ENCODE measurements at regions of chr16 and their contacts with region 1.

Region 1: GRCh38 chr16:27235055-27235937 is 32.0 kb downstream of the KDM8 start:
- DNase-seq: peak; percentile 81 to 98 (median 94)
- ATAC-seq: peak; percentile 68
- H3K4me3 ChIP-seq: peak overlapping the region; percentile 1
- H3K4me3 Mint-ChIP-seq: peak overlapping the region; percentile 83
- H3K27ac ChIP-seq: peak overlapping the region; percentile 94 to 95
- H3K27ac Mint-ChIP-seq: peak overlapping the region; percentile 95
- H3K4me1 ChIP-seq: peaks cover 94% of the 10 kb centered on the region
- H3K4me1 Mint-ChIP-seq: peaks cover 91% of the 10 kb centered on the region
- H3K27me3 ChIP-seq: no peaks in the 10 kb centered on the region
- H3K27me3 Mint-ChIP-seq: no peaks in the 10 kb centered on the region
- CTCF ChIP-seq: peak; percentile 83

Region 2: GRCh38 chr16:27123795-27124409 is 111.4 kb before region 1 on chr16:
- CTCF ChIA-PET with region 1: no interaction called
- POLR2A ChIA-PET with region 1: no interaction called
- intact Hi-C with region 1: no loop called
- DNase-seq: no peak
- ATAC-seq: no peak
- H3K4me3 ChIP-seq: no peak overlapping the region
- H3K4me3 Mint-ChIP-seq: no peak overlapping the region
- H3K27ac ChIP-seq: no peak overlapping the region
- H3K27ac Mint-ChIP-seq: no peak overlapping the region
- H3K4me1 ChIP-seq: no peaks in the 10 kb centered on the region
- H3K4me1 Mint-ChIP-seq: no peaks in the 10 kb centered on the region
- H3K27me3 ChIP-seq: no peaks in the 10 kb centered on the region
- H3K27me3 Mint-ChIP-seq: peaks cover 3% of the 10 kb centered on the region
- CTCF ChIP-seq: no peak

Region 3: DNA sequence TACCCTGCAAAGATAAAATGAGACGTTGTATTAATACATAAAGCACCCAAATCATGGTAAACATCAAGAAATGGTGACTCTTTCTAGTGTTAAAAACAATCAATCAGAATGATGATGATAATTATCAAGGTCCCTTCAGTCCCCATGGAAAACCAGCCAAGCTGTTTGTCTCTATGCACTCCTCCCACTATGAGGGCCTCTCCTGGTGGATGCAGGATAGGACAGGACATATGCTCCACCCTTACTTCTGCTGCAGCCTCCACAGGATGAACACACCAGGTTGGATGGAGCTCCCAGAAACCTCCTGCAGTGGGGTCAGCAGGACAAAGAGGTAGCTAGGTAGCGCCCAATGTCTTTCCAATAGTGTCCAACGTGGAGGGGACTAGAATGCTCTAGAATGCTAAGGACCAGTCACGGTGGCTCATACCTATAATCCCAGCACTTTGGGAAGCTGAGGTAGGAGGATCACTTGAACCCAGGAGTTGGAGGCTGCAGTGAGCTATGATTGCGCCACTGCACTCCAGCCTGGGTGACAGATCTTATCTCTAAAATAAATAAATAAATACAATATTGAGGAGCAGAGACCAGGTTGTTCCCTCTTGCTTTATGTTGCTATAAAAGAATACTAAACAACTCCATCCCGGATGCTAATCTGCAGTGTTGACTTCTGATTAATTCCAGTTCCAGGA is 41.9 kb before region 1 on chr16:
- CTCF ChIA-PET with region 1: interaction called, 14 read pairs
- POLR2A ChIA-PET with region 1: interaction called, 30 read pairs
- intact Hi-C with region 1: loop called in 1 of 2 experiments (anchors 5 kb)
- DNase-seq: no peak
- ATAC-seq: no peak
- H3K4me3 ChIP-seq: no peak overlapping the region
- H3K4me3 Mint-ChIP-seq: no peak overlapping the region
- H3K27ac ChIP-seq: no peak overlapping the region
- H3K27ac Mint-ChIP-seq: peak overlapping the region; percentile 95
- H3K4me1 ChIP-seq: peaks cover 50% of the 10 kb centered on the region
- H3K4me1 Mint-ChIP-seq: peaks cover 65% of the 10 kb centered on the region
- H3K27me3 ChIP-seq: no peaks in the 10 kb centered on the region
- H3K27me3 Mint-ChIP-seq: no peaks in the 10 kb centered on the region
- CTCF ChIP-seq: no peak

Region 4: GRCh38 chr16:27268376-27269299 is 33.3 kb after region 1 on chr16 and contains the start of gene NSMCE1:
- CTCF ChIA-PET with region 1: interaction called, 16 read pairs
- POLR2A ChIA-PET with region 1: interaction called, 33 read pairs
- intact Hi-C with region 1: loop called (anchors 1 to 2 kb)
- DNase-seq: peak; percentile 91 to 98 (median 96)
- ATAC-seq: peak; percentile 97
- H3K4me3 ChIP-seq: peak within 1 kb of the TSS; percentile 86
- H3K4me3 Mint-ChIP-seq: peak within 1 kb of the TSS; percentile 100
- H3K27ac ChIP-seq: peak within 1 kb of the TSS; percentile 81 to 88
- H3K27ac Mint-ChIP-seq: peak within 1 kb of the TSS; percentile 98
- H3K4me1 ChIP-seq: peaks cover 39% of the 10 kb centered on the region
- H3K4me1 Mint-ChIP-seq: peaks cover 73% of the 10 kb centered on the region
- H3K27me3 ChIP-seq: no peaks in the 10 kb centered on the region
- H3K27me3 Mint-ChIP-seq: no peaks in the 10 kb centered on the region
- CTCF ChIP-seq: no peak
- total RNA-seq, gene NSMCE1: 31.9 to 33.9 TPM

Region 5: GRCh38 chr16:27313422-27314160 is 78.3 kb after region 1 on chr16 and contains the start of gene IL4R:
- CTCF ChIA-PET with region 1: interaction called, 75 read pairs
- POLR2A ChIA-PET with region 1: interaction called, 68 read pairs
- intact Hi-C with region 1: loop called (anchors 1 to 2 kb)
- DNase-seq: peak; percentile 33 to 84 (median 56)
- ATAC-seq: peak; percentile 46
- H3K4me3 ChIP-seq: peak within 1 kb of the TSS; percentile 91
- H3K4me3 Mint-ChIP-seq: peak within 1 kb of the TSS; percentile 95
- H3K27ac ChIP-seq: peak within 1 kb of the TSS; percentile 89 to 94
- H3K27ac Mint-ChIP-seq: peak within 1 kb of the TSS; percentile 92
- H3K4me1 ChIP-seq: peaks cover 56% of the 10 kb centered on the region
- H3K4me1 Mint-ChIP-seq: peaks cover 47% of the 10 kb centered on the region
- H3K27me3 ChIP-seq: no peaks in the 10 kb centered on the region
- H3K27me3 Mint-ChIP-seq: no peaks in the 10 kb centered on the region
- CTCF ChIP-seq: no peak
- total RNA-seq, gene IL4R: 145 to 147 TPM

Region 6: GRCh38 chr16:27367461-27368357 is 132.4 kb after region 1 on chr16:
- CTCF ChIA-PET with region 1: interaction called, 105 read pairs
- POLR2A ChIA-PET with region 1: interaction called, 145 read pairs
- intact Hi-C with region 1: loop called (anchors 1 kb)
- DNase-seq: peak; percentile 70 to 98 (median 86)
- ATAC-seq: peak; percentile 79
- H3K4me3 ChIP-seq: peak overlapping the region; percentile 23
- H3K4me3 Mint-ChIP-seq: peak overlapping the region; percentile 35
- H3K27ac ChIP-seq: peak overlapping the region; percentile 86 to 98
- H3K27ac Mint-ChIP-seq: peak overlapping the region; percentile 99
- H3K4me1 ChIP-seq: peaks cover 71% of the 10 kb centered on the region
- H3K4me1 Mint-ChIP-seq: peaks cover 72% of the 10 kb centered on the region
- H3K27me3 ChIP-seq: no peaks in the 10 kb centered on the region
- H3K27me3 Mint-ChIP-seq: no peaks in the 10 kb centered on the region
- CTCF ChIP-seq: peak; percentile 87

Region 7: DNA sequence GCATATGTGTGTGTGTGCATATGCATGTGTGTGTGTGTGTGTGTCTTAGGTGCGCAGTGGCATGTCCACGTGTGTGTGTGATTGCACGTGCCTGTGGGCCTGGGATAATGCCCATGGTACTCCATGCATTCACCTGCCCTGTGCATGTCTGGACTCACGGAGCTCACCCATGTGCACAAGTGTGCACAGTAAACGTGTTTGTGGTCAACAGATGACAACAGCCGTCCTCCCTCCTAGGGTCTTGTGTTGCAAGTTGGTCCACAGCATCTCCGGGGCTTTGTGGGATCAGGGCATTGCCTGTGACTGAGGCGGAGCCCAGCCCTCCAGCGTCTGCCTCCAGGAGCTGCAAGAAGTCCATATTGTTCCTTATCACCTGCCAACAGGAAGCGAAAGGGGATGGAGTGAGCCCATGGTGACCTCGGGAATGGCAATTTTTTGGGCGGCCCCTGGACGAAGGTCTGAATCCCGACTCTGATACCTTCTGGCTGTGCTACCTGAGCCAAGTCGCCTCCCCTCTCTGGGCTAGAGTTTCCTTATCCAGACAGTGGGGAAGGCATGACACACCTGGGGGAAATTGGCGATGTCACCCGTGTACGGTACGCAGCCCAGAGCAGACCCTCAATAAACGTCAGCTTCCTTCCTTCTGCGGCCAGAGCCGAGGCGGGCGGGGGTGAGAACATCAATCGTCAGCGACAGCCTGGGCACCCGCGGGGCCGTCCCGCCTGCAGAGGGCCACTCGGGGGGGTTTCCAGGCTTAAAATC is 214.3 kb after region 1 on chr16:
- CTCF ChIA-PET with region 1: interaction called, 10 read pairs
- POLR2A ChIA-PET with region 1: interaction called, 8 read pairs
- intact Hi-C with region 1: loop called in 1 of 2 experiments (anchors 5 kb)
- DNase-seq: peak; percentile 31 to 93 (median 60)
- ATAC-seq: peak; percentile 46
- H3K4me3 ChIP-seq: peak overlapping the region; percentile 10
- H3K4me3 Mint-ChIP-seq: peak overlapping the region; percentile 70
- H3K27ac ChIP-seq: peak overlapping the region in 1 of 2 donors; percentile 18
- H3K27ac Mint-ChIP-seq: peak overlapping the region; percentile 93
- H3K4me1 ChIP-seq: peaks cover 78% of the 10 kb centered on the region
- H3K4me1 Mint-ChIP-seq: peaks cover 81% of the 10 kb centered on the region
- H3K27me3 ChIP-seq: no peaks in the 10 kb centered on the region
- H3K27me3 Mint-ChIP-seq: no peaks in the 10 kb centered on the region
- CTCF ChIP-seq: no peak